Activated B cell treated with CpG ODN at 0.5 μM for 24 hours (primary cell): ENCODE measurements at regions of chr6 and their contacts with region 1.

Region 1: GRCh38 chr6:35008853-35009252 is 119.8 kb downstream of the ANKS1A start:
- DNase-seq: no peak
- ATAC-seq: no peak
- H3K4me3 Mint-ChIP-seq: no peak overlapping the region
- H3K27ac Mint-ChIP-seq: no peak overlapping the region
- H3K4me1 Mint-ChIP-seq: no peaks in the 10 kb centered on the region
- H3K27me3 Mint-ChIP-seq: no peaks in the 10 kb centered on the region
- CTCF ChIP-seq: no peak

Region 2: DNA sequence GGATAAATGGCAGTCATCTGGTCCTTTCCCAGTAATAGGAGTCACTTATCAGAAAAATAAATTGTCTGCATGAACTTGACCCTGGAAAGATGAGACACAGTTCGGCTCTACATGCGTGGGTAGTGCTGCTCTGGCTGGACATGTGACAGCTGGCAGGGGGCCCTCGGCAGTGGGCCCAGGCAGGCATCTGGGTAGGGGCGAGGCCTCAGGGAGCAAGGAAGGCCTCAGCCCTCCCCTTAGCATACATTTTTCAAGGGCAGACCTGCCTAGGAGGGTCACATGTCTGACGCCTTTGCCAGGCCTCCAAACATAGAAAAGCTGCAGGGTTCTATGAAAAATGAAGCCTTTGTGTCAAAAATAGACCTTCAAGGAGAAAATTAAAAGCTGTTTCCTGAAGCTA is 299.5 kb before region 1 on chr6:
- CTCF ChIA-PET with region 1: no interaction called
- POLR2A ChIA-PET with region 1: interaction called, 12 read pairs
- intact Hi-C with region 1: no loop called
- DNase-seq: no peak
- ATAC-seq: no peak
- H3K4me3 Mint-ChIP-seq: no peak overlapping the region
- H3K27ac Mint-ChIP-seq: no peak overlapping the region
- H3K4me1 Mint-ChIP-seq: no peaks in the 10 kb centered on the region
- H3K27me3 Mint-ChIP-seq: no peaks in the 10 kb centered on the region
- CTCF ChIP-seq: no peak

Region 3: DNA sequence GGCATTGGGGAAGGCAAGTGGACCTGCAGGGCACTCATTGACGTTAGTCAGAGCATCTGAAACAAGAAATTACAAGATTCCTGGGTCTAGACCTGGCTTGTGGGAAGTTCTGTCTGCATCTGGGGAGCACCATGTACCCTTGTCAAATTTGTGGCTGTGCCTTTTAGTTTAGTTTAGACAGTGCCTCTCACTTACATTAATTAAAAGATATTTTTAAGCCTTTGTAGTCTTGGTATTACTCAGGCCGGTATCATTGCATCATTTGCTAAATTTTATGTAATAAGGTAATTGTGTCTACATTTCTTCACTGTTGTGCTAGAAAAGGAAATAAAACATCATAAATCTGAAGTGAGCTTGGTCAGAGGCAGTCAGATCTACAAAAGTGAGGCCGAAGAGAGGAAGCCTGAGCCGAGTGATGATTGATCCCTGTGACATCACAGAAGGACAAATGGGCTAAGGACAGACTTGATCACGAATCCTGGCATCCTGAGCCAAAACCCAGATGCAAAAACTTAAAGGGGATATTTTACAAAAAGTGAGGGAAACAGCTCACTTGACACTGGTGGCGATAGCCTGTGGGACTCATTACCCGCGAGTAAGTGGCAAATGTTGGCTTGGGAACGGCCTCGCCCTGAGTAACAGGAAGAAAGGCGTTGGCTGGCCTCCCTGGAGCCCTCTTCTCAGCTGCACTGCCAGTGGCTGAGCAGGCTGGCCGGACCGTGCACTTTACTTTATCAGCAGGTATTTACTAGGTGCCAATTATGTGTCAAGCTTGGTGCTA is 25.7 kb after region 1 on chr6:
- CTCF ChIA-PET with region 1: no interaction called
- POLR2A ChIA-PET with region 1: no interaction called
- intact Hi-C with region 1: no loop called
- DNase-seq: no peak
- ATAC-seq: no peak
- H3K4me3 Mint-ChIP-seq: no peak overlapping the region
- H3K27ac Mint-ChIP-seq: no peak overlapping the region
- H3K4me1 Mint-ChIP-seq: peaks cover 3% of the 10 kb centered on the region
- H3K27me3 Mint-ChIP-seq: no peaks in the 10 kb centered on the region
- CTCF ChIP-seq: no peak